Activated naive CD4-positive, alpha-beta T cell treated with anti-CD3 and anti-CD28 coated beads, Interleukin-2, amount 10 ng/mL, durations not matched to agents 7 days and 5 days (primary cell): ENCODE measurements at regions of chr2 and their contacts with region 1.

Region 1: DNA sequence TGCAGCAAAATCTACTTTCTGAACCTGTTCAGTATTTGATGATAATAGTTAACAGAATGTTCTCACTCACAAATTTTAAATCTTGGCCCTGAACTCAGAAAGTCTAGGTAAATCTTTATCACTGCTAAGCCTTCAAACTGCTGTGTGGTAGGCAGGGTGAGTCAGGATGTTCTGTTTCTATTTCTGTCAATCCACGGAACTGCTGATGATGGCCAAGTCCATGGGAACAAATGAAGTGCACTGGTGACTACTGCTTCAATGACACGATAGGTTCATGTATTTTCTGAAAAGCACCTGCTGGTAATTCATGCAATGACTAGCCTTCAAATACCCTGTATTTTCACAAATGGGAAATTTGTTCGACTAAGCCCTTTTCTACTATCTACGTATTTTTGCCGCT is 14.2 kb downstream of the NIFK start:
- DNase-seq: no peak
- H3K4me3 Mint-ChIP-seq: no peak overlapping the region
- H3K27ac Mint-ChIP-seq: no peak overlapping the region
- H3K4me1 Mint-ChIP-seq: peaks cover 25% of the 10 kb centered on the region
- H3K27me3 Mint-ChIP-seq: peaks cover 3% of the 10 kb centered on the region

Region 2: DNA sequence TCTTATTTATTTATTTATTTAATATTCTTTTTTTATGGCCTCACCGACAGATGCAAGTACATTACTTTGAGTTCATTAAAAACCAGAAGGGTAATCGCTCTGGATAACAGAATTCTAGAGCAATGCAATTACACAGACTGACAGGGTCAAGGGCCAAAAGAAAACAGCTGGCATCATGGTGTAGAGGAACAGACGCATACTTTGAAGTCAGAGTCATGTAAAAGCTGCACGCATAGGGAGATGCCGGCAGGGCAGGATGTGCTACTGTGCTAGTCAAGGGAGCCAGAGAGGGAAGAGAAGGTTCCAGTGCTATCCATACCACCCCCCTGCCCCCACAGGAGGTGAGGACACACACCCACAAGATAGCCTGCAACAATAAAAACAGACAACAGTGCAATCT is 322.3 kb before region 1 on chr2:
- CTCF ChIA-PET with region 1: interaction called, 17 read pairs
- DNase-seq: no peak
- H3K4me3 Mint-ChIP-seq: no peak overlapping the region
- H3K27ac Mint-ChIP-seq: no peak overlapping the region
- H3K4me1 Mint-ChIP-seq: no peaks in the 10 kb centered on the region
- H3K27me3 Mint-ChIP-seq: no peaks in the 10 kb centered on the region

Region 3: GRCh38 chr2:121532347-121532766 is 190.1 kb before region 1 on chr2:
- CTCF ChIA-PET with region 1: interaction called, 13 read pairs
- DNase-seq: no peak
- H3K4me3 Mint-ChIP-seq: peak overlapping the region; percentile 28
- H3K27ac Mint-ChIP-seq: peak overlapping the region; percentile 42
- H3K4me1 Mint-ChIP-seq: peaks cover 46% of the 10 kb centered on the region
- H3K27me3 Mint-ChIP-seq: no peaks in the 10 kb centered on the region

Region 4: DNA sequence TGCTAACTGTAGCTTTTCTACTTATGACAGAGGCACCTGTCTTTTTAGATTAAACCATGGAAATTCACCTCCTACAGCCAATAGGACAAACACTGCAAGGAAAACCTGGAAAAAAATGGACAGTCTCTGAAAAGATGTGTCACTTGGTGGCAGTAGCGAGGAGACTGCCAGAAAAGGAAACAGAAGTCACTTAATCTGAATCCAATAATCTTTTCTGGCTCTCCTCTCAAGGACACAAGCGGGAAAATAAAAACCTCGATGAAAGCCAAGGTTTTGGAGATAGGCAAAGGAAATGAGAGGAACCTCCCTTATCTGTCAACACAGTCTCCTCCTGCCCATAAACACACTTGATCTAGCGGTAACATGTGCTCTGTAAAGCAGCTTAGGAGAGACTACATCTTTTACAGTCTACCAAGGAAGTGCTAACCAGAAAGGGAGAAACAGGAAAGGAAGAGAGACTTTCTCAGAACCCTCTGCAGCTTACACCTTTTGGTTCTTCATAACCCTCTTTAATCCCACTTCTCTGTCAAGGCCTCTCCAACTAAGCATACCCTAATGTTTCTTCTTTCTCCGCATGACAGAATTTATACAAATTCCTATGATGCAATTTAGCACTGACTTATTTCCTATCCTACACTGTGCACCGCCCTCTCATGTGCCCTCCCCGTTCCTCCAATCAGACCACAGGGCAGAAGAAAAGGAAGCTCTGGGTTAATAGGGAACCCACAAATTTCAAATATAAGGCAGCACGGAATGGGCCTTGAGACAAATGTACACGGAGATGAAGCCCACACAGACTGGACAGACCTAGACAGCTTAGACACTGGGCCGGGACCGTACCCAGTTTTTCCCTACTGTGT is 126.0 kb before region 1 on chr2:
- CTCF ChIA-PET with region 1: interaction called, 25 read pairs
- DNase-seq: peak; percentile 44
- H3K4me3 Mint-ChIP-seq: peak overlapping the region; percentile 74
- H3K27ac Mint-ChIP-seq: peak overlapping the region; percentile 90
- H3K4me1 Mint-ChIP-seq: peaks cover 44% of the 10 kb centered on the region
- H3K27me3 Mint-ChIP-seq: no peaks in the 10 kb centered on the region

Region 5: DNA sequence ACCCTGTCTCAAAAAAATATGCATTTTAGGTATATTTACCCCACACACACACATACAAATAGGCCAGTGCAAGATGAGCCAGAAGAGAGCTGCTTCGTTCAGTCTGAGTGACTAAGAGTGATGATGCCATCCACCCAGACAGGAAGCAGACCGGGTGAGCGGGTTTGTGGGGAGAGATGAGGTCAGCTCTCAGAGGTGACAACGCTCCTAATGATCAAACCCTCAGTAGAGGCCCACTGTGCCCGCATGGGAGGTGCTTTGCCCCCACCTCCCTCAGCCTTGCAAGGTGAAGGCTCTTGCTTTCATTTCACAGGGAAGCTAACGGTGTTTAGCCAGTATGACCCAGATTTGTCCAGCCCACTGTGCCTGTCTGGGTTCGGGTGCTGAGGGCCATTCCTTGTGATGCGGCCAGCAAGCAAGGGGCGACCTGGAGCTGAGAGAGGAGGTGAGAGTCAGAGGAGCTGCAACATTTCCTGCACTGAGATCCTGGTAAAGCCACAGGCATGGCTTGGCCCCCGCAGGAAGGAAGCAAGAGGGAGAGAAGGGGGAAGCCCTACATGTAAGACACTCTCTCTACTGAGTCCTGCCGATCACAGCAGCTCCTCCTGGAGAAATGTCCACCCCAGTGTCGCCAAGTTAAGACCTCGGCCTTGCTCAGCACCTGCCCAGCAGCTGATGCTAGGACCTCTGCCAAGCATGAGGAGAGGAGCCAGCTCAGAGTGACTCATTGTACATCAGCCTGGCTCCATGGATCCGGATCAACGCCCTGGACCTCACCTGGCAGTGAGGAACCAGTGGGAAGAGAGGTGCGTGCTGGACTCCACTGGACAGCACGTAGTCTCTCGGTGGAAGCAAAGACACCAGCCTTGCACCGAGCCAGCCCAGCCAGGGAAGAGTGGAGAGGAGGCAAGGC is 22.8 kb before region 1 on chr2:
- CTCF ChIA-PET with region 1: interaction called, 10 read pairs
- DNase-seq: peak; percentile 91
- H3K4me3 Mint-ChIP-seq: peak overlapping the region; percentile 72
- H3K27ac Mint-ChIP-seq: peak overlapping the region; percentile 93
- H3K4me1 Mint-ChIP-seq: peaks cover 48% of the 10 kb centered on the region
- H3K27me3 Mint-ChIP-seq: no peaks in the 10 kb centered on the region